ENCODE measurements at regions of chr13 and their contacts with region 1.

Region 1: GRCh38 chr13:41061075-41061913 is at the start of gene WBP4:
- DNase-seq: peak; percentile 96
- H3K4me3 Mint-ChIP-seq: peak within 1 kb of the TSS; percentile 100
- H3K27ac Mint-ChIP-seq: peak within 1 kb of the TSS; percentile 100
- H3K4me1 Mint-ChIP-seq: peaks cover 46% of the 10 kb centered on the region
- H3K27me3 Mint-ChIP-seq: peaks cover 5% of the 10 kb centered on the region
- total RNA-seq, gene WBP4: 13.3 and 14.1 TPM in 2 replicates

Region 2: GRCh38 chr13:40922437-40923040 is 138.8 kb before region 1 on chr13:
- intact Hi-C with region 1: loop called (anchors 2 kb)
- DNase-seq: no peak
- H3K4me3 Mint-ChIP-seq: peak overlapping the region; percentile 73
- H3K27ac Mint-ChIP-seq: peak overlapping the region; percentile 80
- H3K4me1 Mint-ChIP-seq: peaks cover 13% of the 10 kb centered on the region
- H3K27me3 Mint-ChIP-seq: no peaks in the 10 kb centered on the region

Region 3: GRCh38 chr13:41004875-41005693 is 56.2 kb before region 1 on chr13:
- intact Hi-C with region 1: loop called (anchors 2 kb)
- DNase-seq: peak; percentile 82
- H3K4me3 Mint-ChIP-seq: peak overlapping the region; percentile 74
- H3K27ac Mint-ChIP-seq: peak overlapping the region; percentile 84
- H3K4me1 Mint-ChIP-seq: peaks cover 54% of the 10 kb centered on the region
- H3K27me3 Mint-ChIP-seq: no peaks in the 10 kb centered on the region

Region 4: GRCh38 chr13:41049480-41050440 is 11.5 kb before region 1 on chr13:
- intact Hi-C with region 1: no loop called
- DNase-seq: no peak
- H3K4me3 Mint-ChIP-seq: no peak overlapping the region
- H3K27ac Mint-ChIP-seq: no peak overlapping the region
- H3K4me1 Mint-ChIP-seq: peaks cover 27% of the 10 kb centered on the region
- H3K27me3 Mint-ChIP-seq: no peaks in the 10 kb centered on the region

Region 5: GRCh38 chr13:41117869-41118268 is 56.6 kb after region 1 on chr13:
- intact Hi-C with region 1: no loop called
- DNase-seq: no peak
- H3K4me3 Mint-ChIP-seq: no peak overlapping the region
- H3K27ac Mint-ChIP-seq: no peak overlapping the region
- H3K4me1 Mint-ChIP-seq: no peaks in the 10 kb centered on the region
- H3K27me3 Mint-ChIP-seq: no peaks in the 10 kb centered on the region

Region 6: GRCh38 chr13:41132512-41133152 is 71.3 kb after region 1 on chr13 and contains the start of gene KBTBD6:
- intact Hi-C with region 1: loop called (anchors 1 kb)
- DNase-seq: peak; percentile 98
- H3K4me3 Mint-ChIP-seq: peak within 1 kb of the TSS; percentile 98
- H3K27ac Mint-ChIP-seq: peak within 1 kb of the TSS; percentile 96
- H3K4me1 Mint-ChIP-seq: peaks cover 43% of the 10 kb centered on the region
- H3K27me3 Mint-ChIP-seq: no peaks in the 10 kb centered on the region
- total RNA-seq, gene KBTBD6: 6.3 and 6.8 TPM in 2 replicates

Region 7: GRCh38 chr13:41263261-41264027 is 202.2 kb after region 1 on chr13 and contains the start of gene MTRF1:
- intact Hi-C with region 1: loop called (anchors 1 kb)
- DNase-seq: peak; percentile 94
- H3K4me3 Mint-ChIP-seq: peak within 1 kb of the TSS; percentile 98
- H3K27ac Mint-ChIP-seq: peak within 1 kb of the TSS; percentile 100
- H3K4me1 Mint-ChIP-seq: peaks cover 8% of the 10 kb centered on the region
- H3K27me3 Mint-ChIP-seq: no peaks in the 10 kb centered on the region
- total RNA-seq, gene MTRF1: 20.1 and 20.6 TPM in 2 replicates

Region 8: GRCh38 chr13:41352935-41353840 is 291.9 kb after region 1 on chr13:
- intact Hi-C with region 1: loop called (anchors 5 kb)
- DNase-seq: peak; percentile 89
- H3K4me3 Mint-ChIP-seq: no peak overlapping the region
- H3K27ac Mint-ChIP-seq: peak overlapping the region; percentile 81
- H3K4me1 Mint-ChIP-seq: peaks cover 34% of the 10 kb centered on the region
- H3K27me3 Mint-ChIP-seq: no peaks in the 10 kb centered on the region

Region 9: DNA sequence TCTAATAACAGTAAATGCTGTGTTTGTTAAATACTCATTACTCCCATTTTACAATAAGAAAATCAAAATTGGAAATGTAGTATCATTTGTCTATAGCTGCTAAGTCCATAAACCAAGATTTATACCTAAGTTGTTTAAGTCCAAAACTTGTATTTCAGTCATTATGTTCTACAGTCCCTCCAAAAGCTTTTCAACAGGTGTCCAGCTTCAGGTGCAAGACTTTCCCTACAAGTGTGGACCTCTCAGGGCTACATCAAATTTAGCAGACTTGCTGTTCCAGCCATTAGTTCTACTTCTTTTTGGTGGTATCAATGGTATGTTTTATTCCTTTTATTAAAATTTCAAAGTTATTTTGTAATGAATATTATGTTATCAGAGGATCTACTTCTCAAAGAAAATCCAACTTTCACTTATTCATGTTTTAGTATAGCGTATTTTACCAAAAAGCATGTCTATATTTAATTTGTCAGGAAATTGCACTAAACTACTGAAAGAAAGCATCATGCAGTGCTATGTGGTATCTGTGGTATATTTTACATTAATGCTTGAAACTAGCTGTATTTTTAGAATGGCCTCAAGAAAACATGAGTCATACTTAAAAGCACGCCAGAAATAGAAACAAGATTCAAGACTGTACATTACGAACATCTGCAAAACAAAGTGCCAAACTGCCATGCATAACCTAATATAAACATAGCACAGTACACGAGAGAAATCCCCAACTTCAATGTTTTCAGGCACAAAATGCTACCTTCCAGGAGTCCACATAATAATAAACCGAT is 855.1 kb after region 1 on chr13:
- intact Hi-C with region 1: loop called (anchors 5 kb)
- DNase-seq: peak; percentile 76
- H3K4me3 Mint-ChIP-seq: peak overlapping the region; percentile 76
- H3K27ac Mint-ChIP-seq: peak overlapping the region; percentile 86
- H3K4me1 Mint-ChIP-seq: peaks cover 44% of the 10 kb centered on the region
- H3K27me3 Mint-ChIP-seq: no peaks in the 10 kb centered on the region